ENCODE measurements at regions of chr16 and their contacts with region 1.

Region 1: GRCh38 chr16:8885674-8886592 is 3.8 kb downstream of the LITAFD start:
- DNase-seq: peak; percentile 64
- ATAC-seq: peak; percentile 15
- H3K4me3 ChIP-seq: no peak overlapping the region
- H3K27ac ChIP-seq: no peak overlapping the region
- H3K4me1 ChIP-seq: no peaks in the 10 kb centered on the region
- H3K27me3 ChIP-seq: peaks cover 14% of the 10 kb centered on the region
- CTCF ChIP-seq: no peak

Region 2: GRCh38 chr16:8567750-8568617 is 317.9 kb before region 1 on chr16:
- intact Hi-C with region 1: loop called (anchors 10 kb)
- DNase-seq: peak; percentile 72
- ATAC-seq: peak; percentile 95
- H3K4me3 ChIP-seq: no peak overlapping the region
- H3K27ac ChIP-seq: no peak overlapping the region
- H3K4me1 ChIP-seq: no peaks in the 10 kb centered on the region
- H3K27me3 ChIP-seq: peaks cover 26% of the 10 kb centered on the region
- CTCF ChIP-seq: peak; percentile 99

Region 3: GRCh38 chr16:8768692-8769091 is 117.2 kb before region 1 on chr16:
- intact Hi-C with region 1: no loop called
- DNase-seq: no peak
- ATAC-seq: no peak
- H3K4me3 ChIP-seq: no peak overlapping the region
- H3K27ac ChIP-seq: no peak overlapping the region
- H3K4me1 ChIP-seq: no peaks in the 10 kb centered on the region
- H3K27me3 ChIP-seq: no peaks in the 10 kb centered on the region
- CTCF ChIP-seq: no peak

Region 4: DNA sequence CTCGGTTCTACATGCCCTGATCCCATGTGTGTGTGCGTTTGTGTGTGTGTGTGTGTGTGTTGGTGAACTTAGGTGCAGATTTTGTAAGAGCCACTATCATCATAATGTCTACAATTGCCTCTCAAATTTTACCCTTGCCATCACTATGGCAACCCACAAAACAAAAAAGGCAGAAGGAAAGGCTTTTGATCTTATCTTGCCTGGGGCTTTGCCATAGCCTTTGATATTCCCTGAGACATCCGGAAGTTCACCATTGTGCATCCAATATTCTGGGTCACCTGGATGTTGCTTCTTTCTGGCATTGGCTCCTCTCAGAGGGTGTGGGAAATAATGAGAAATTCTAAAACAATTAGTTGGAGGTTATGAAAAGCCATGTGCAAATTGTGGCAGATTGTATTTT is 320.2 kb after region 1 on chr16:
- intact Hi-C with region 1: no loop called
- DNase-seq: no peak
- ATAC-seq: no peak
- H3K4me3 ChIP-seq: no peak overlapping the region
- H3K27ac ChIP-seq: no peak overlapping the region
- H3K4me1 ChIP-seq: no peaks in the 10 kb centered on the region
- H3K27me3 ChIP-seq: no peaks in the 10 kb centered on the region
- CTCF ChIP-seq: no peak

Region 5: GRCh38 chr16:9340526-9341256 is 454.8 kb after region 1 on chr16:
- intact Hi-C with region 1: no loop called
- DNase-seq: no peak
- ATAC-seq: no peak
- H3K4me3 ChIP-seq: no peak overlapping the region
- H3K27ac ChIP-seq: no peak overlapping the region
- H3K4me1 ChIP-seq: no peaks in the 10 kb centered on the region
- H3K27me3 ChIP-seq: no peaks in the 10 kb centered on the region
- CTCF ChIP-seq: no peak